Esophagus squamous epithelium (tissue), 5 donors: ENCODE measurements at regions of chr11 and their contacts with region 1.

Region 1: GRCh38 chr11:74090701-74091100 is 80.1 kb downstream of the C2CD3 start:
- DNase-seq: no peak
- H3K4me3 ChIP-seq: no peak overlapping the region
- H3K27ac ChIP-seq: no peak overlapping the region
- H3K4me1 ChIP-seq: no peaks in the 10 kb centered on the region
- H3K27me3 ChIP-seq: no peaks in the 10 kb centered on the region
- CTCF ChIP-seq: peak in 2 of 6 experiments; percentile 11 to 25
- POLR2A ChIP-seq: no peak

Region 2: DNA sequence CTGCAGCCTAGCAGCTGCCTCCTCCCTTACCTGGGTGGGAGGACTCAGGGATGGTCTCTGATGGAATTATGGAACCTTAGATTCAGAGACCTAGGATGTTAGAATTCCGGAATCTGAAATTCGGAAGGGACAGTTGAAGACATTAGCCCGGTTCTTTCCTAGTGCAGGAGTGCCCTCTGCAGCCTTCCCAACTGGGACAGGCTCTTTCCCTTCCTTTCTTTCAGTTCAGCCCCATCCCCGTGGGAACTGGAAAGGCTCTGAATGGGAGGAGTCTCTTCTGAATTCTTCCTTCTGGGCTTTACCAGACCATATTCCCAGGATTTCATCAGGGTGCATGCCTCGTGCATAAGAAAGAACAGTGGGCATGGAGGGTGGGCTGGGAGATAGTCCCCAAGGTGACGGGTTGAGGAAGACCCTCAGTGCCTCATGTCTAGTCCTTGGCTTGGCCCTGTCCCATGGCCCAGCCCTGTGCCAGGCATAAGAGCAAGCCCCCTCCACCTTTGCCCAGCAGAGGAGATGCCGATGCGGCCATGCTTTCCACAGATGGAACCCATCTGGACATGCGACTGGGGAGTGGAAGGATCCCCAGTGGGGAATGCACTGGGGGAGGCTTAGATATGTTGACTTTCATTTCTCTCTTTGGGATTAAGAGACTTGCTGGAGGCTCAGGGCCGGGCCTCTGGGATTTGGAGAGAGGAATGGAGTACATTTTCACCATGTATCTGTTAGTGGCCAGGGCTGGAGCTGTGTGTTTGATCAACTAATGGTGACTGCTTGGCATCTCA is 125.4 kb before region 1 on chr11:
- intact Hi-C with region 1: loop called (anchors 10 kb)
- DNase-seq: no peak
- H3K4me3 ChIP-seq: no peak overlapping the region
- H3K27ac ChIP-seq: no peak overlapping the region
- H3K4me1 ChIP-seq: peaks cover 3 to 14% (median 5%) of the 10 kb centered on the region in 3 donors
- H3K27me3 ChIP-seq: peaks cover 0 to 12% (median 0%) of the 10 kb centered on the region in 4 donors
- CTCF ChIP-seq: no peak
- POLR2A ChIP-seq: no peak

Region 3: GRCh38 chr11:74669211-74670160 is 578.8 kb after region 1 on chr11:
- intact Hi-C with region 1: no loop called
- DNase-seq: no peak
- H3K4me3 ChIP-seq: no peak overlapping the region
- H3K27ac ChIP-seq: no peak overlapping the region
- H3K4me1 ChIP-seq: peaks cover 0 to 9% (median 5%) of the 10 kb centered on the region in 3 donors
- H3K27me3 ChIP-seq: no peaks in the 10 kb centered on the region
- CTCF ChIP-seq: no peak
- POLR2A ChIP-seq: no peak